Activated CD4-positive, alpha-beta T cell treated with anti-CD3 and anti-CD28 coated beads for 36 hours (primary cell): ENCODE measurements at regions of chr12 and their contacts with region 1.

Region 1: DNA sequence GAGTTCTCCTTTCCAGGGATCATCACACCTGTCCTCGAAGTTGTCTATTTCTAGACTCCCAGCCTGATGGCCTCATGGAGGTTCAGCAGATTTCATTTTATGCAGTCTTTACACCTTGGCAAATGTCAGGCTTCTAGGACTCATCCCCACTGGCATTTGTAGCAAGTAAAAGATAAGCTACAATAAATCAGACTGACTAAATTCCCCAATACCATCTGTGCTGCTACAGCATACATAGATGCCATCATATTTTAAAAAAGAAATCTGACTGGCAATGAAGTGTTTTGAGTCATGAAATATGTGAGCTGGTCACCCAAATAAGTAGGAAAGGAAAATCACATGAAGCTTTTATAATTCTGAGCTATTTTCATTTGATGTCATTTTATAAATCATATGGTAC is 55.3 kb downstream of the KCNC2 start:
- DNase-seq: no peak
- ATAC-seq: no peak
- H3K4me3 Mint-ChIP-seq: no peak overlapping the region
- H3K27ac Mint-ChIP-seq: no peak overlapping the region
- H3K4me1 Mint-ChIP-seq: no peaks in the 10 kb centered on the region
- H3K27me3 Mint-ChIP-seq: peaks cover 4% of the 10 kb centered on the region

Region 2: GRCh38 chr12:76101739-76102385 is 947.5 kb after region 1 on chr12:
- CTCF ChIA-PET with region 1: no interaction called
- POLR2A ChIA-PET with region 1: interaction called, 12 read pairs
- intact Hi-C with region 1: no loop called
- DNase-seq: no peak
- ATAC-seq: no peak
- H3K4me3 Mint-ChIP-seq: no peak overlapping the region
- H3K27ac Mint-ChIP-seq: no peak overlapping the region
- H3K4me1 Mint-ChIP-seq: no peaks in the 10 kb centered on the region
- H3K27me3 Mint-ChIP-seq: no peaks in the 10 kb centered on the region

Region 3: DNA sequence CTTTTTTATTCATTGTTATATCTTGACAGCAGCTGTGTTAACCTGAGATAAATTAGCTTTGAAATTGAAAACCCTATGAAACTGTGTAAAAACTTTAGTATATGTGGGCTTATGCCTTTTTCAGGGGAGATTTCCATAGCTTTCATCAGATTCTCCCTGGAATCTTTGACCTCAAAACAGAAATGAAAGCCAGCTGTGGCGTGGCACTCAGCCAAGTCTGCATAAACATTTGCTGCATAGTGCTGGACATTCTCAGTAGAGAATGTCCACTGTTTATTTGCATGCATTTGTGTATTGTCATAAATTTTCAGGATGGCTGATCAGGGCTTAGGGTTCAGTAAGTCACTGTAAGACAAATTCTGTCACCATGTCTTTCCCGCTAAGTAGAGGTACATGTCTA is 1045.4 kb after region 1 on chr12:
- CTCF ChIA-PET with region 1: no interaction called
- POLR2A ChIA-PET with region 1: no interaction called
- intact Hi-C with region 1: no loop called
- DNase-seq: no peak
- ATAC-seq: no peak
- H3K4me3 Mint-ChIP-seq: no peak overlapping the region
- H3K27ac Mint-ChIP-seq: no peak overlapping the region
- H3K4me1 Mint-ChIP-seq: peaks cover 3% of the 10 kb centered on the region
- H3K27me3 Mint-ChIP-seq: peaks cover 21% of the 10 kb centered on the region